ENCODE measurements at regions of chr3 and their contacts with region 1.

Region 1: DNA sequence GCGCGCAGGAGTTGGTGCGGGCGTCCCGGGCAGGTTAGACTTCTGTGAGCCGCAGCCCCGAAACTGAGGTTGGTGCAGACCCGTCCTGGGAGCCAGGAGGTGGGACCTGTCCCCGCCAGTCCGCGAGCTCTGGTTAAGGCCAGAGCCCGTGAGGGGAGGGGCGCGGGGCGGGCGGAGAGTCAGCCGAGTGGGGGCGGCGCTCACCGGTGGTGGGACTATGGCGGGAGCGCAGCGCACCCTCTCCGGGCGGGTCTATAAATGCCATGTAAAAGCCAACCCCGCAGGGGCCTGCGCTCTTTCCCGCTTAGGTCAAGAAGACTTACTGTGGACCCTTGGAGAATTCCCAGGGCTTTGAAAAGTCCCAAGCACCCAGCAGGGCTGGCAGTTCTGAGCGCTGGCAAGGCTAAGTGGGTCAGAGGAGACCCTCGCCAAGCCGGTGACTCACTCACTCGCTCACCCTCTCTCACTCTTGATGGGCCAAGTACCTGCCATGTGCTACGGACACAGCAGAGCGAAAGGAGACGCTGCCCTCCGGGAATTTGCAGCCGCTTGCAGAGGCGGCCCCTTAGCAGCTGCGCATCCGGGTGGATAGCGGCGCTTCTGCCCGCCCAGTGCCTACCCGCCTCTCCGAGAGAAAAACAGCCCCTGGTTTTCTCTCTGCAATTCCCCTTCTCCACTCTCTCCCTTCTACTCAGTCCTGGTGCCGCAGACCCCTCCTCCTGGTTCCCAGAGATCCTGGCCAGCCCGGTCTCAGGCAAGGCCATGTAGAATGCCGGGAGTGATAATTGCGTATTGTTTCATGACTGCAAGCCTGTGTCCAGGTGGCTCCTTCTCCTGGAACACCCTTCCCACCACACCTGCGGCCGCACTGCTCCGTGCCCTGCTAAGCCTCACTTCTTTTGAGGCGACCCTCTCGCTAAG is at the start of gene ALDH1L1:
- DNase-seq: peak; percentile 50
- H3K4me3 ChIP-seq: peak within 1 kb of the TSS; percentile 47
- CTCF ChIP-seq: no peak

Region 2: GRCh38 chr3:126100634-126101301 is 80.0 kb before region 1 on chr3:
- in situ Hi-C with region 1: loop called (anchors 5 kb)
- DNase-seq: peak; percentile 82
- H3K4me3 ChIP-seq: no peak overlapping the region
- CTCF ChIP-seq: no peak